Common myeloid progenitor, CD34-positive (primary cell): ENCODE measurements at regions of chr1 and their contacts with region 1.

Region 1: GRCh38 chr1:19113697-19114092 is 96.4 kb downstream of the UBR4 start:
- DNase-seq: peak; percentile 51 to 68 (median 65)
- H3K4me3 ChIP-seq: no peak overlapping the region
- H3K27ac ChIP-seq: no peak overlapping the region
- H3K4me1 ChIP-seq: no peaks in the 10 kb centered on the region
- H3K27me3 ChIP-seq: no peaks in the 10 kb centered on the region

Region 2: GRCh38 chr1:18820791-18821641 is 292.7 kb before region 1 on chr1:
- CTCF ChIA-PET with region 1: no interaction called
- POLR2A ChIA-PET with region 1: no interaction called
- DNase-seq: peak; percentile 30 to 60 (median 44)
- H3K4me3 ChIP-seq: no peak overlapping the region
- H3K27ac ChIP-seq: no peak overlapping the region
- H3K4me1 ChIP-seq: no peaks in the 10 kb centered on the region
- H3K27me3 ChIP-seq: peaks cover 0 to 52% (median 15%) of the 10 kb centered on the region in 5 experiments

Region 3: DNA sequence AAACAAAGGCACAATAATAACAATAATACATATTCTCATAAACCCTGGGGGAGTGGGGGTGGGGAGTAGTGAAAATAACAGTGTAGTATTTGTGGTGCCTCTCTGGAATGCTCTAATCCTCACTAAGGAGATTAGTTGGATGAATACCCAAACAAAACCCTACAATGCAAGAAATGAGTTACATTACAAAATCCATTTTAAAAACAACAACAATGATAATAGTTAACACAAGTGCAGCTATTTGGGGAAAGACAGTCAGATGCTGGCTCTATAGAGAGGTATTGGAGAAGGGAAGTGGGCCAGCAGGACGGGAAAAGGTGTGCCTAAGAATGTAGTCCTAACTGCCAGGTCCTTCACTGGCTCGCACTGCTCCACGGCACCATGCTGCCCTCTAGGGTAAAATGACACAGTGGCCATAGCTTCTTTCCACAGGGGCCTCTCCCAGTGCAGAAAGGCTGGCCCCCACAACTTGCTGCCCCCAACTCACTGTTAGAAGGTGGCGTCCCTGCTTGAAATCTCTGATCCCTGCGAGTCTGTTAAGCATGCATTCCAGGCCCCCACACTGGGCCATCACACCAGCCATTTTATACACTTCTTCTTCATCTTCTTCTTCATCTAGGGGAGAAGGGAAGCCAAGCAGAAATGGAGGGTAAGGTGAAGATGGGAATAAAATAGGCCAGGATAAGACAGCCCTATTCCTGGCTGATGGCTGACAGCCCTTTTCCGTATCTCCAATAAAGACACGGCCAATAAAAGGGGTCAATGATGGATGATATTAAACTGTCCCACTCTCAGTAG is 17.5 kb before region 1 on chr1:
- CTCF ChIA-PET with region 1: interaction called, 13 read pairs
- POLR2A ChIA-PET with region 1: no interaction called
- DNase-seq: peak in 2 of 3 donors; percentile 14 to 24
- H3K4me3 ChIP-seq: no peak overlapping the region
- H3K27ac ChIP-seq: no peak overlapping the region
- H3K4me1 ChIP-seq: no peaks in the 10 kb centered on the region
- H3K27me3 ChIP-seq: no peaks in the 10 kb centered on the region

Region 4: GRCh38 chr1:19101244-19101643 is 12.5 kb before region 1 on chr1:
- CTCF ChIA-PET with region 1: interaction called, 16 read pairs
- POLR2A ChIA-PET with region 1: no interaction called
- DNase-seq: no peak
- H3K4me3 ChIP-seq: no peak overlapping the region
- H3K27ac ChIP-seq: no peak overlapping the region
- H3K4me1 ChIP-seq: no peaks in the 10 kb centered on the region
- H3K27me3 ChIP-seq: no peaks in the 10 kb centered on the region